RWPE1 (cell line): ENCODE measurements at regions of chr5 and their contacts with region 1.

Region 1: DNA sequence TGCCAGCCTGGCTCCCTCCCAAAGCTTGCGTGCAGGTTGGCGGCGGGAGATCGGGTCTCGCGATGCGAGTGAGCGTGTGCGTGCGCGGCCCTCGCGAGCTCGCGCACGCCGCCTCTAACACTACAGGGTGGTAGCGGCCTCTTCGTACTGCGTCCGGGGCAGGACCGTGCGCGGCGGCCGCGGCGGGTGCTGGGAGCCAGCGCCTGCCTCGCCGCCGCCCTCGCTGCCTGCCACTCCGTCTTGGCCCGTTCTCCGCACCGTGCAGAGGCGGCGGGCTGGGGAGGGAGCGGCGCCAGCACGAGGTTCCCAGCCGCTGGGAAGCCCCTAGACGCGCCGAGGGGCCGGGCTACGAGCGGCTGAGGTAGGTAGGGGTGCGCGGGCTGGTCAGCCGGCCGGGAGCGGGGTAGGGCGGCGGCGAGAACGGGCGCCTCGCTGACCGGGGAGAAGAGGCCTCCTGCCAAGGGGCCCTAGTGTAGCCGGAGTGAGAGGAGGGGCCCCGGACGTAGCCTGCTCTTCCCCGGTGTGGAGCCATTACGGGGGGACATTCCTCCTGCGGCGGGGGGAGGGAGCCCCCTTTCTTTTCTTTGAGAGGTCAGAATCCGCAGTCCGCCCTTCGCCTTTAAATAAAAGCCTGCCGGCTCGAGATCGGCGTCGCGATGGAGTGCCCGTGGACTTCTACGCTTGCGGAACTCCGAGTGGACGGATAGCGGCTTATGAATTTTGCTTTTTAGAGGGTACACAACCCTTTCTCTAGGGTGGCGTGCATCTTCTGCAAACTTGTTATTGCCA is at the start of gene C5orf24:
- DNase-seq: peak; percentile 96
- H3K27ac ChIP-seq: peak within 1 kb of the TSS; percentile 93
- CTCF ChIP-seq: no peak

Region 2: DNA sequence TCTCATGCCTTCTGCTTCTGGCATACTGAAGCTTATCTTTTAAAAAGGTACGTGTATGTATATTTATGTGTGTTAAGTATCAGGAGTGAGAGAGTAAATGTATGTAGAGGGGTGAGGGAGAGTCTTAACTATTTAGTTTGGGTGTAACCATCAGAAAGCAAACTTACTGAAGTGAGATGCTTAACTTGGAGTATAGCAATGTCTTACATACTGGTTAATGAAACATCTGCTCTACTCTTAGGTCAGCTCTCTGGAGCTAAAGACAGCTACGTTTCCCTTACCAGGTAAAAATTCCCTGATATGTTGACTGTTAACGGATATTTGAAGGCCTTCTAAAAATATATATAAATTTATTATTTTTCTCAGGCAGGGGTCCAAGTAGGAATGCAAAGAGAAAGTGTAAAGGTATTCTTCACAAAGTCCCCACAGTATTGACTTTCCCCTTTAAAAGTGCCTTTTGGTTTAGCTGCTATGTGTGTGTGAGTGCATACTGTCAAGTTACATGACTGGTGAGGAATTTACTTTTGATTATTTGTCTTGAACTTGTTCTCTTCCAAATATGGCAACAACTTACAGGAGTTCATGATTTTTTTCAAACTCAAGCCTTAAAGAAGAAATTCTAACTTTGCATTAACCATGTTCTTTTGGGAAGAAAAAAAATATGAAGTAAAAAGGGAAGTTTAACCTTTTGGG is 12.6 kb before region 1 on chr5:
- CTCF ChIA-PET with region 1: interaction called, 3 read pairs
- POLR2A ChIA-PET with region 1: interaction called, 10 read pairs
- DNase-seq: no peak
- H3K27ac ChIP-seq: no peak overlapping the region
- CTCF ChIP-seq: no peak